ENCODE measurements at regions of chr11 and their contacts with region 1.

Region 1: DNA sequence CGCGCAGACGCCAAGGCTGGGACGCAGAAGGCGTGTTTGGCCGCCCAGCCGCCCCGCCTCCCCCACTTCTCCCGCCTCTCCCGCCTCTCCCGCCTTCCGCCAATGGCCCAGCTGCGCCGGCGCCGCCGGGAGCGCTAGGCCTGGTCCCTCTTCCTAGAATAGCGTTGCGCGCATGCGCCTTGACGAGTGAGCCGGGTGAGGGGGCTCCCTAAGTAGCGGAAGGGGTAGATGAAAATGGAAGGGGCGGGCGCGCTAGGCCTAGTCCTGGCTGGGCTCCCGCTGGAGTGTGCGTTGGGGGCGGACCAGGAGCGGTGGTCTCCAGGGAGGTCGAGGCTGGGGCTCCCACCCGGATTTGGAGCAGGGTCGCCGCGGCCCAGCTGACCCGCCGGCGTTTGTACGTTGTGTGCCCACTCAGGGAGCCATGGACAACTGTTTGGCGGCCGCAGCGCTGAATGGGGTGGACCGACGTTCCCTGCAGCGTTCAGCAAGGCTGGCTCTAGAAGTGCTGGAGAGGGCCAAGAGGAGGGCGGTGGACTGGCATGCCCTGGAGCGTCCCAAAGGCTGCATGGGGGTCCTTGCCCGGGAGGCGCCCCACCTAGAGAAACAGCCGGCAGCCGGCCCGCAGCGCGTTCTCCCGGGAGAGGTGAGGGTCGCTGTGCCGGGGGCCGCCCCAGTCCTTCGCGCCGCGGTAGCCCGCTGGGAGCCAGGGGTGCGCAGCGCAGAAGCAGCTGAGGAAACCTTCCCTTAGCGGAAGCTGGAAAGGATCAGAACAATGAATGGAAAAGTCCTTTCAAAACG is at the start of gene AKIP1:
- DNase-seq: peak; percentile 98
- ATAC-seq: peak; percentile 97
- total RNA-seq, gene AKIP1: 23.3 TPM

Region 2: GRCh38 chr11:8870411-8871170 is 40.6 kb before region 1 on chr11:
- intact Hi-C with region 1: loop called (anchors 5 kb)
- DNase-seq: peak; percentile 72
- ATAC-seq: peak; percentile 83

Region 3: GRCh38 chr11:8964324-8965320 is 53.4 kb after region 1 on chr11 and contains the start of gene TMEM9B:
- intact Hi-C with region 1: loop called (anchors 5 kb)
- DNase-seq: peak; percentile 96
- ATAC-seq: peak; percentile 97
- total RNA-seq, gene TMEM9B: 46.1 TPM